ENCODE measurements at regions of chr10 and their contacts with region 1.

Region 1: GRCh38 chr10:100185364-100186252 is at the start of gene ERLIN1:
- DNase-seq: peak; percentile 85 to 88
- ATAC-seq: peak; percentile 95
- H3K4me3 ChIP-seq: peak within 1 kb of the TSS; percentile 78 to 94 (median 90)
- H3K27ac ChIP-seq: peak within 1 kb of the TSS; percentile 94 to 99 (median 95)
- H3K4me1 ChIP-seq: peaks cover 15 to 35% of the 10 kb centered on the region in 2 donors
- H3K27me3 ChIP-seq: no peaks in the 10 kb centered on the region
- CTCF ChIP-seq: no peak
- POLR2A ChIP-seq: peak; percentile 81 to 83
- total RNA-seq, gene ERLIN1: 5.3 to 8.5 (median 7.3) TPM

Region 2: GRCh38 chr10:99845837-99846382 is 339.7 kb before region 1 on chr10:
- in situ Hi-C with region 1: no loop called
- intact Hi-C with region 1: loop called (anchors 5 kb)
- DNase-seq: peak; percentile 52 to 75
- ATAC-seq: peak; percentile 97 to 99
- H3K4me3 ChIP-seq: peak overlapping the region; percentile 28 to 41 (median 32)
- H3K27ac ChIP-seq: peak overlapping the region in 1 of 4 donors; percentile 7
- H3K4me1 ChIP-seq: peaks cover 0 to 6% of the 10 kb centered on the region in 2 donors
- H3K27me3 ChIP-seq: no peaks in the 10 kb centered on the region
- CTCF ChIP-seq: peak; percentile 88 to 93 (median 91)
- POLR2A ChIP-seq: no peak

Region 3: DNA sequence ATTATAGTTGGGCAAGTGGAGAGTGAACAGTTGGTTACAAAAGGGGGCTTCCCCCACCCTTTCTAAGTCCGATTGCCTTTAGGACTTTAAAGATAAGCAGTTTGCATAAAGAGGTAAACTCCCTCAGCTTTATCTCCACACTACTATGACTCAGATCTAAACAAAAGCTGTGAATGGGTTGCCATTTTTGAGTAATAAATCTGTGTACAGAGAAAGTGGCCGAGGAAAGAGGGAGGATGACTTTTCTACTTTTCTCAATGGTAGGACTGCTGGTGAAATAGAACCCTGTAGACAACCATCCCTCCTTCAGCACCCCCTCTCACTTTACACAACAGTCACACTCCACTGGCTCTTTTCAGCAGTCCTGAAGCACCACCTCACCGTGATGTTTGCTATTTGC is 247.0 kb before region 1 on chr10:
- in situ Hi-C with region 1: no loop called
- intact Hi-C with region 1: no loop called
- DNase-seq: no peak
- ATAC-seq: no peak
- H3K4me3 ChIP-seq: no peak overlapping the region
- H3K27ac ChIP-seq: no peak overlapping the region
- H3K4me1 ChIP-seq: peaks cover 6 to 14% of the 10 kb centered on the region in 2 donors
- H3K27me3 ChIP-seq: no peaks in the 10 kb centered on the region
- CTCF ChIP-seq: no peak
- POLR2A ChIP-seq: no peak

Region 4: GRCh38 chr10:100100651-100101184 is 84.9 kb before region 1 on chr10:
- in situ Hi-C with region 1: no loop called
- intact Hi-C with region 1: no loop called
- DNase-seq: no peak
- ATAC-seq: no peak
- H3K4me3 ChIP-seq: no peak overlapping the region
- H3K27ac ChIP-seq: no peak overlapping the region
- H3K4me1 ChIP-seq: no peaks in the 10 kb centered on the region
- H3K27me3 ChIP-seq: no peaks in the 10 kb centered on the region
- CTCF ChIP-seq: no peak
- POLR2A ChIP-seq: no peak

Region 5: DNA sequence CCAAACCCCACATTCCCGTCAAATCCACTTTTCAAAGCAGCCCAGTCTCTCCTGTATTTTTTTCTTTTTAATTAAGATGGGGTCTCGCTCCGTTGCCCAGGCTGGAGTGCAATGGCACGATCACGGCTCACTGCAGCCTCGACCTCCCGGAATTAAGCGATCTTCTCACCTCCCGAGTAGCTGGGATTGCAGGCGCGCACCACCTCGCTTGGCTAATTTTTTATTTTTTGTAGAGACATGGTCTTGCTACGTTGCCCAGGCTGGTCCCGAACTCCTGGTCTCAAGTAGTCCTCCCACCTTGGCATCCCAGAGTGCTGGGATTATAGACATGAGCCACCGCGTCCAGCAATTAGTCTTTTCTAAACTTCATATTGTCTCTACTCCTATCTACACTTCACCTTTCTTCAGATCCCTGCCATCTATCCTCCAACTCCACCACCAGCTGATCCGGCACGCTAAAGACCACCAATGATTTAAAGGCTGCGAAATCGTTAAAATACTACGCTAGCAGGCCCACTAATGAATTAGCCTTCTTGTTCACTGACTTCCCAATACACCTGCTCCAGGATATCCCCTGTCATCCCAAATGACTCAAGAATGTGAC is 44.3 kb after region 1 on chr10:
- in situ Hi-C with region 1: no loop called
- intact Hi-C with region 1: loop called (anchors 1 kb)
- DNase-seq: no peak
- ATAC-seq: no peak
- H3K4me3 ChIP-seq: peak overlapping the region; percentile 73 to 96 (median 86)
- H3K27ac ChIP-seq: peak overlapping the region; percentile 80 to 87 (median 83)
- H3K4me1 ChIP-seq: peaks cover 14 to 16% of the 10 kb centered on the region in 2 donors
- H3K27me3 ChIP-seq: no peaks in the 10 kb centered on the region
- CTCF ChIP-seq: no peak
- POLR2A ChIP-seq: no peak

Region 6: DNA sequence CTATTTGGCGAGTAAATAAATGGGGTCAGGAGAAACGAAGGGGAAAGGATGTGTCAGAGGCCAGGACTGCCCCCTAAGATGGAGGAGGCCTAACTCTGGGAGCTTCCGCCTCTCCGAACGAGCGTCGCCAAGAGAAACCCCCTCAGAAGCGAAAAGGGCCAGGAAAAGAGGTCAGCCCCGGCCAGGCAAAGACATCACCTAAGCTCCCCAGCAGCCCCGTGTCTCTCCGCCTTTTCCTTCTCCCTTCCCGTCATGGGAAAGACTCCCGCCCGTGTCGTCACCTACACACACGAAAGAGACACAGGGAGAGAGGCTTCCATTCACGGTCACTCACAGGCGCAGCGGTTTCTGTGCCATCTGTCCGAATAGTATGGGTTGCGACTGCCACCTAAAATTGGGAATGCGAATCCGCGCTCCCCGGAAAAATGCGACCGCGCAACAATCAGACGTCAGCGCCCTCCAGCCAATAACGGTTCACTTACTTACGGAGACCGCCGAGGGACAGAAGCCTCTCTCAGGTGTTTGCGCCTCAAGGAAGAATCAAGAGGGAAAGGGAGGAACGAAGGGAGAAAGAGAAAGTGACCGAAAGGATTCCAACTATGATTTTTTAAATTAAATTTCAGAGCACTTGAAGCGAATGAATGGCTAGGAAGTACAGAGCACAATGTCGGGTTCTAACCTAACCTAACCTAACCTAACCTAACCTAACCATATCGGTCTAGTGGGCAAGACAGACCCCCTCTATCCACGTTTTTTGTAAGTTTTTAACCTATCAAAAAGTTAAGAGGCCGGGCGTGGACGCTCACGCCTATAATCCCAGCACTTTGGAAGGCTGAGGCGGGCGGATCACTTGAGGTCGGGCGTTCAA is 81.9 kb after region 1 on chr10 and contains the start of gene CWF19L1:
- in situ Hi-C with region 1: no loop called
- intact Hi-C with region 1: loop called (anchors 1 kb)
- DNase-seq: peak; percentile 78 to 86
- ATAC-seq: peak; percentile 99
- H3K4me3 ChIP-seq: peak within 1 kb of the TSS; percentile 68 to 99 (median 90)
- H3K27ac ChIP-seq: peak within 1 kb of the TSS; percentile 76 to 86 (median 80)
- H3K4me1 ChIP-seq: peaks cover 9 to 20% of the 10 kb centered on the region in 2 donors
- H3K27me3 ChIP-seq: no peaks in the 10 kb centered on the region
- CTCF ChIP-seq: no peak
- POLR2A ChIP-seq: peak; percentile 14 to 25
- total RNA-seq, gene CWF19L1: 11.6 to 13.8 (median 13.0) TPM